ENCODE measurements at regions of chr2 and their contacts with region 1.

Region 1: GRCh38 chr2:38750891-38751595 is at the start of gene SRSF7:
- DNase-seq: peak; percentile 95 to 98 (median 97)
- ATAC-seq: peak; percentile 87
- H3K4me3 ChIP-seq: peak within 1 kb of the TSS; percentile 96
- H3K4me3 Mint-ChIP-seq: peak within 1 kb of the TSS; percentile 95 to 100 (median 99)
- H3K27ac ChIP-seq: peak within 1 kb of the TSS; percentile 95
- H3K27ac Mint-ChIP-seq: peak within 1 kb of the TSS; percentile 98 to 100 (median 100)
- H3K4me1 ChIP-seq: peaks cover 31 to 41% of the 10 kb centered on the region in 2 donors
- H3K4me1 Mint-ChIP-seq: peaks cover 40 to 72% (median 58%) of the 10 kb centered on the region in 7 donors
- H3K27me3 ChIP-seq: no peaks in the 10 kb centered on the region
- H3K27me3 Mint-ChIP-seq: peaks cover 0 to 5% (median 0%) of the 10 kb centered on the region in 5 donors
- total RNA-seq, gene SRSF7: 259 to 503 (median 310) TPM

Region 2: DNA sequence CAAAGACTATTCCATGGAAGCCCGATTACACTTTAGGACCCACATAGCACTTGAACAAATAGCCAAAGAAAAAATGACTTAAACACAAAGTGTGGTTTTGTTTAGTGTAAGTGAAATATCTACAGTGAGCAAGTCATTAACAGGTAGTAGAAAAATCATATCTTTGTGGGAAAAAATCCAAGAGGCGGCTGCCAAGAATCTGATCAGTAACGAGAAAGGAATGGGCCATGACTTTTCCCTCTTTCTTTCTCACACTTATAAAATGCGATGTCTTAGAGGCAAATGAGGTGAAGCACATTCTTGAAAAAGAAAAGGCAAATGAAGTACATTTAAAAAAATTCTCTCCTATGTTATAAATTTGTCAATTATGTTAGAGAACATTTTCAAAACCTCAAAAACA is 14.1 kb after region 1 on chr2:
- CTCF ChIA-PET with region 1: interaction called, 3 read pairs
- POLR2A ChIA-PET with region 1: interaction called, 12 read pairs
- intact Hi-C with region 1: loop called in 1 of 2 experiments (anchors 1 kb)
- DNase-seq: no peak
- ATAC-seq: no peak
- H3K4me3 ChIP-seq: no peak overlapping the region
- H3K4me3 Mint-ChIP-seq: no peak overlapping the region
- H3K27ac ChIP-seq: no peak overlapping the region
- H3K27ac Mint-ChIP-seq: no peak overlapping the region
- H3K4me1 ChIP-seq: no peaks in the 10 kb centered on the region
- H3K4me1 Mint-ChIP-seq: peaks cover 0 to 7% (median 0%) of the 10 kb centered on the region in 7 donors
- H3K27me3 ChIP-seq: no peaks in the 10 kb centered on the region
- H3K27me3 Mint-ChIP-seq: no peaks in the 10 kb centered on the region

Region 3: GRCh38 chr2:38806015-38806732 is 55.1 kb after region 1 on chr2:
- CTCF ChIA-PET with region 1: no interaction called
- POLR2A ChIA-PET with region 1: interaction called, 11 read pairs
- intact Hi-C with region 1: no loop called
- DNase-seq: no peak
- ATAC-seq: peak; percentile 52
- H3K4me3 ChIP-seq: no peak overlapping the region
- H3K4me3 Mint-ChIP-seq: no peak overlapping the region
- H3K27ac ChIP-seq: no peak overlapping the region
- H3K27ac Mint-ChIP-seq: peak overlapping the region in 1 of 9 donors; percentile 21
- H3K4me1 ChIP-seq: no peaks in the 10 kb centered on the region
- H3K4me1 Mint-ChIP-seq: peaks cover 0 to 3% (median 0%) of the 10 kb centered on the region in 7 donors
- H3K27me3 ChIP-seq: no peaks in the 10 kb centered on the region
- H3K27me3 Mint-ChIP-seq: no peaks in the 10 kb centered on the region

Region 4: DNA sequence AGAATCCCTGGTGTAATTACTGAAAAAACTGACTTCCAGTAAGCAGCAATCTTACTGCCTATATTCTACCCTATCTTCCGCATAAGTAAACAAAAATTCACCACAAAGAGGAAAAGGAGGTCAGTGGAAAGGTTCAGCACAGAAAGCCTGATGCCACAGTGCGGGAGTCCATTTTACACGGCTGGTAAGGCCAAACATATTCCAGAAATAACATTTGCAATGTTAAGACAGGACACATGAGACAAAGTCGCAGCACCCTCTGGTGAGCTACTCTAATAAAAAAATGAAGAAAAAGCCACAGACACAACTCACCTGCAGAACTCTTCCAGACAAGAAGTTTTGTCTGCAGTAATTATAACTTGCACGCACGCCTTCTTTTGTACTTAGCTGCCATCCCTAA is 67.5 kb after region 1 on chr2:
- CTCF ChIA-PET with region 1: no interaction called
- POLR2A ChIA-PET with region 1: no interaction called
- intact Hi-C with region 1: no loop called
- DNase-seq: no peak
- ATAC-seq: no peak
- H3K4me3 ChIP-seq: no peak overlapping the region
- H3K4me3 Mint-ChIP-seq: no peak overlapping the region
- H3K27ac ChIP-seq: no peak overlapping the region
- H3K27ac Mint-ChIP-seq: no peak overlapping the region
- H3K4me1 ChIP-seq: no peaks in the 10 kb centered on the region
- H3K4me1 Mint-ChIP-seq: peaks cover 0 to 1% (median 0%) of the 10 kb centered on the region in 7 donors
- H3K27me3 ChIP-seq: no peaks in the 10 kb centered on the region
- H3K27me3 Mint-ChIP-seq: no peaks in the 10 kb centered on the region

Region 5: DNA sequence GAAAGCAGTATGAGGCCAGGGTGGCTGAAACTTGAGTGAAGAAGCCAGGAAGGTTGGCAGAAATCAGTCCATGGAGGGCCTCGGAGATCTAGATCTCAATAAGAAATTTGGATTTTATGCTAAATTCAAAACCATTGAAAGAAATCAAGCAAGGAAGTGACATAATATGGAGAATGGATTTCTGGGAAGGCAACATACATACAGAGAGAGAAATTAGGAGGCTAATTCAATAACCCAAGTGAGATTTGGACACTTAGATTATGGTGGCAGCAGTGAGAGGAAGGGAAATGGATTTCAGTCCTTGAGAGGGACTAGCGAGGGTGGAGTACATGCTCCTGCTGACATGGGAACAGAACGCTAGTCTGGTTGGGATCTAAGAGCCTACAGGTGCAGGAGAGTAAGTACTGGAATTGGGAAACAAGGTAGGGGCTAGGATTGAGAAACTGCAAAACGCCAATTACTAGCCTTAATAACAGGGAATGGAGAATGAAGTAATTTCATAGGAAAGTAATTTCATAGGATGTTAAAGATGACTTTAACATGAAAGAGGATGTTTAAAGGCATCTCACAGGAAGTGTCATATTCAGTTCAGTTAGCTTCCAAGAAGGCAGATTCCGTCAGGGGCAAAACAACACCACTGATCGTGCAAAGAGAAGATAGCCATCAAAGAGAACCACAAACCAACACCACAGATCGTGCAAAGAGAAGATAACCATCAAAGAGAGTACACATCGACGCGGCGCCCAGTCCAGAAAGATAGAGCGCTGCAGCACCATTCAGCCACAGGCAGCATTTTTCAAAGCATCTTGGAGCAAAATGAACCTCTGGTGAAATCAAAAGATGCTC is 465.5 kb after region 1 on chr2:
- CTCF ChIA-PET with region 1: no interaction called
- POLR2A ChIA-PET with region 1: no interaction called
- intact Hi-C with region 1: loop called in 1 of 2 experiments (anchors 2 kb)
- DNase-seq: peak; percentile 18 to 92 (median 81)
- ATAC-seq: peak; percentile 94
- H3K4me3 ChIP-seq: peak overlapping the region; percentile 20
- H3K4me3 Mint-ChIP-seq: peak overlapping the region; percentile 18 to 84 (median 60)
- H3K27ac ChIP-seq: peak overlapping the region; percentile 1
- H3K27ac Mint-ChIP-seq: peak overlapping the region; percentile 32 to 97 (median 75)
- H3K4me1 ChIP-seq: peaks cover 29 to 38% of the 10 kb centered on the region in 2 donors
- H3K4me1 Mint-ChIP-seq: peaks cover 26 to 72% (median 38%) of the 10 kb centered on the region in 7 donors
- H3K27me3 ChIP-seq: no peaks in the 10 kb centered on the region
- H3K27me3 Mint-ChIP-seq: peaks cover 0 to 2% (median 0%) of the 10 kb centered on the region in 5 donors